ENCODE measurements at regions of chr17 and their contacts with region 1.

Region 1: GRCh38 chr17:49031965-49032928 is 35.1 kb downstream of the IGF2BP1 start:
- DNase-seq: peak; percentile 73
- H3K4me3 ChIP-seq: no peak overlapping the region
- H3K27ac ChIP-seq: no peak overlapping the region
- H3K4me1 ChIP-seq: no peaks in the 10 kb centered on the region
- CTCF ChIP-seq: peak; percentile 88

Region 2: GRCh38 chr17:48678141-48678971 is 353.9 kb before region 1 on chr17:
- CTCF ChIA-PET with region 1: no interaction called
- POLR2A ChIA-PET with region 1: no interaction called
- intact Hi-C with region 1: loop called (anchors 2 kb)
- DNase-seq: peak; percentile 54
- H3K4me3 ChIP-seq: no peak overlapping the region
- H3K27ac ChIP-seq: no peak overlapping the region
- H3K4me1 ChIP-seq: no peaks in the 10 kb centered on the region
- CTCF ChIP-seq: peak; percentile 91

Region 3: DNA sequence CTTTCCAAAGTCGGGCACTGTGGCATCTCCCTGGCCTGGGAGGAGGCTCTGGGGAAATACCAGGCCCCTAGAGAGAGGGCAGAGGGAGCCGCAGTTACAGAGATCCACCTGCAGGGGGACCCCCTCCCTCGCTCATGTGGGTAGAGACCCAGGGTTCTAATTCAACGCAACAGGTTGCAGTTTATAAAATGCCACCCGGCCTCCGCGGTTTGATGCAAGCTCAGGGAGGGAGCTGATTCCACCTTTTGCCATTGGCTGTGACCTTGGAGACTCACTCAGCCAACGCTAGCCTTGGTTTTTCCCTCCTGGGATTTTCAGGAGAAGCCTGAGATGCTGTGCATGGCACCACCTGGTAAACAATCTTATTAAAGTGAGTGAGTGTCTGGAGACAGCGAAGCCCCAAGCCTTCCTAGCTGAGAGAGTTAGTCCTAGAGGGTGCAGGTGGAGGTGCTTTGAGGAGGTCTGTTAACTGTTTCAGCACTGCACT is 227.3 kb before region 1 on chr17:
- CTCF ChIA-PET with region 1: no interaction called
- POLR2A ChIA-PET with region 1: no interaction called
- intact Hi-C with region 1: loop called (anchors 5 kb)
- DNase-seq: peak; percentile 55
- H3K4me3 ChIP-seq: no peak overlapping the region
- H3K27ac ChIP-seq: no peak overlapping the region
- H3K4me1 ChIP-seq: no peaks in the 10 kb centered on the region
- CTCF ChIP-seq: peak; percentile 92

Region 4: GRCh38 chr17:48892940-48893645 is 139.2 kb before region 1 on chr17:
- CTCF ChIA-PET with region 1: no interaction called
- POLR2A ChIA-PET with region 1: no interaction called
- intact Hi-C with region 1: loop called (anchors 2 kb)
- DNase-seq: peak; percentile 29
- H3K4me3 ChIP-seq: peak overlapping the region; percentile 96
- H3K27ac ChIP-seq: peak overlapping the region; percentile 46
- H3K4me1 ChIP-seq: peaks cover 19% of the 10 kb centered on the region
- CTCF ChIP-seq: no peak

Region 5: GRCh38 chr17:48908047-48908843 is 124.0 kb before region 1 on chr17 and contains the start of gene UBE2Z:
- CTCF ChIA-PET with region 1: no interaction called
- POLR2A ChIA-PET with region 1: interaction called, 10 read pairs
- intact Hi-C with region 1: no loop called
- DNase-seq: peak; percentile 95
- H3K4me3 ChIP-seq: peak within 1 kb of the TSS; percentile 99
- H3K27ac ChIP-seq: peak within 1 kb of the TSS; percentile 76
- H3K4me1 ChIP-seq: peaks cover 22% of the 10 kb centered on the region
- CTCF ChIP-seq: peak; percentile 62
- total RNA-seq, gene UBE2Z: 44.7 and 52.3 TPM in 2 replicates

Region 6: GRCh38 chr17:48954300-48954755 is 77.9 kb before region 1 on chr17:
- CTCF ChIA-PET with region 1: interaction called, 3 read pairs
- POLR2A ChIA-PET with region 1: no interaction called
- intact Hi-C with region 1: loop called (anchors 5 kb)
- DNase-seq: peak; percentile 43
- H3K4me3 ChIP-seq: no peak overlapping the region
- H3K27ac ChIP-seq: no peak overlapping the region
- H3K4me1 ChIP-seq: peaks cover 9% of the 10 kb centered on the region
- CTCF ChIP-seq: peak; percentile 73

Measured in OCI-LY7 (cell line).